Activated B cell treated with CpG ODN at 0.5 μM for 24 hours (primary cell): ENCODE measurements at regions of chr9 and their contacts with region 1.

Region 1: DNA sequence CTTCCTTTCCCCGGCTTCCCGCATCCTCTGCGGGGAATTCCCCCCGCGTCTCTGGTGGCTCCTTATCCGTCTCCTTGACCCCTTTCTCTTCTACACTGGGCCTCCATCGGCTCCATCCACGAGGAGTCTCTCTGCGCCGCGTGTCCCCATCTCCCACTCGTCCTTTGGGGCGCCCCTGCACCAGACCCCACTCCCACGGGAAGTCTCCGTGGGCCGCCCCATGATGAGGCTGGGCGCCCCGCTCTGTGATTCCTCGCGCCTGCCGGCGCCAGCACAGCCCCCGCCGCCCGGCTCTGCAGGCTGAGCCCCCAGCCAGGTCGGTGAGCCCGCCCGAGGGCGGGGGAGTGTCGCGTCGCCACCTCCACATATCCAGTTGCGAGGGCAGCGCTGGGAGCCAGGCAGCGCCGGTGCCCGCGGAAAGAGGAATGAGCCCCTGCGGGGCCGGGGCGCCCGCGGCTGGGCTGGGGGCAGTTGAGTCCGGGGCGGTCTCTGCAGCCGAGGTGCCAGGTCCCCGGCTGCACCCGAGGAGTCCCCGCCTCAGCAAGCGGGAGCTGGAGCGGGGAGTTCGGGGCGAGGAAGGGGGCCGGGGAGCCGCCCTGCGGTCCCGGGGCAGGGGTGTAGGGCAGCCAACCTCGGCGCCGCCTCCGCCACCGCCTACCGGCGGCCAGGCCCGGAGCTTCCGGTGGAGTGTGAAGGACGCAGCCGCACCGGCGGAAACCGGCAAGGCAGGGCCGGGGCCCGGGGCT is 2.1 kb upstream of the TRAF1 start:
- DNase-seq: peak; percentile 76
- ATAC-seq: peak; percentile 41
- H3K4me3 Mint-ChIP-seq: peak overlapping the region; percentile 87
- H3K27ac Mint-ChIP-seq: peak overlapping the region; percentile 99
- H3K4me1 Mint-ChIP-seq: peaks cover 89% of the 10 kb centered on the region
- H3K27me3 Mint-ChIP-seq: no peaks in the 10 kb centered on the region
- CTCF ChIP-seq: no peak

Region 2: DNA sequence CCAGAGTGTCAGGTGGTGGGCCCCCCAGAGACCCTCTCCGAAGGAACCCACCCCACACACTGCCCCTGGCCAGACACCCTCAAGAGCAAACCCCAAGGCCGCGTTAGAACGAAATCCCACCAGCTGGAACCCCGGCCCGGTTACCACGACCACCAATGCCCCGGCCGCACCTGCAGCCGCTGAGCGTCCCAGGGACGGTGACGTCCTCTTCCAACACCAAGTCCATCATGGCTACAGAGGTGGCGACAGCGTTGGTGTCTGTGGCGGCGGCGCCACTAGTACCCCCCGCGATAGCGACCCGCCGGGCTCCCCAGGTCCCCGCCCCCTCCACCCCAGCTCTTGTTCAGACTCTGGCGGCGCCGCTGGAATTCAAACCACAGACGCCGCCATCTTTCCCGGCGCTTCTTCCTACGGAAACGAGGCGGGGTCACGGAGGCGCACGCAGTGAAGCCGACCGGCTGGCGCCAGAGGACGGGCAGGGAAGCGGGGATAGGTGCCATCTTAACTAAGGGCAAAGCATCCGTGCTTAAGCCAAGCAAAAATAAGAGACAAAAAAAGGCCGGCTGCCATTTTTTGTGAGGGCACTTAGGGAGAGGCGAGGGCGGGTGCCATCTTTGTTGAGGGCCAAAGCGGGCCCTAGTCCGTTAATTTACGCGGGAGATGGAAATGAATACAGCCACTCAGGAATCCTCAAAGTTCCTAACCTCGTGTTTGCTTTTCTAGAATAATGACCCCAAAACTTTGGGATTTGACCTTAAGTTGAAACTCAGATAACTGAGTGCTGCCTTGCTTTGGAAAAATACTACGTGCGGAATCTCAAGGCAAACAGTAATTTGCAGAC is 348.7 kb before region 1 on chr9 and contains the start of gene CDK5RAP2:
- CTCF ChIA-PET with region 1: no interaction called
- POLR2A ChIA-PET with region 1: no interaction called
- intact Hi-C with region 1: loop called (anchors 5 kb)
- DNase-seq: peak; percentile 78
- ATAC-seq: peak; percentile 94
- H3K4me3 Mint-ChIP-seq: peak within 1 kb of the TSS; percentile 94
- H3K27ac Mint-ChIP-seq: peak within 1 kb of the TSS; percentile 88
- H3K4me1 Mint-ChIP-seq: peaks cover 47% of the 10 kb centered on the region
- H3K27me3 Mint-ChIP-seq: no peaks in the 10 kb centered on the region
- CTCF ChIP-seq: no peak
- total RNA-seq, gene CDK5RAP2: 63.9 and 80.0 TPM in 2 replicates

Region 3: GRCh38 chr9:120792898-120793765 is 135.5 kb before region 1 on chr9 and contains the start of gene FBXW2:
- CTCF ChIA-PET with region 1: interaction called, 5 read pairs
- POLR2A ChIA-PET with region 1: interaction called, 15 read pairs
- intact Hi-C with region 1: no loop called
- DNase-seq: peak; percentile 87
- ATAC-seq: peak; percentile 91
- H3K4me3 Mint-ChIP-seq: peak within 1 kb of the TSS; percentile 91
- H3K27ac Mint-ChIP-seq: peak within 1 kb of the TSS; percentile 89
- H3K4me1 Mint-ChIP-seq: peaks cover 38% of the 10 kb centered on the region
- H3K27me3 Mint-ChIP-seq: no peaks in the 10 kb centered on the region
- CTCF ChIP-seq: no peak
- total RNA-seq, gene FBXW2: 70.4 and 77.9 TPM in 2 replicates

Region 4: GRCh38 chr9:120807607-120808379 is 120.9 kb before region 1 on chr9:
- CTCF ChIA-PET with region 1: no interaction called
- POLR2A ChIA-PET with region 1: no interaction called
- intact Hi-C with region 1: no loop called
- DNase-seq: no peak
- ATAC-seq: no peak
- H3K4me3 Mint-ChIP-seq: no peak overlapping the region
- H3K27ac Mint-ChIP-seq: no peak overlapping the region
- H3K4me1 Mint-ChIP-seq: no peaks in the 10 kb centered on the region
- H3K27me3 Mint-ChIP-seq: no peaks in the 10 kb centered on the region
- CTCF ChIP-seq: no peak

Region 5: DNA sequence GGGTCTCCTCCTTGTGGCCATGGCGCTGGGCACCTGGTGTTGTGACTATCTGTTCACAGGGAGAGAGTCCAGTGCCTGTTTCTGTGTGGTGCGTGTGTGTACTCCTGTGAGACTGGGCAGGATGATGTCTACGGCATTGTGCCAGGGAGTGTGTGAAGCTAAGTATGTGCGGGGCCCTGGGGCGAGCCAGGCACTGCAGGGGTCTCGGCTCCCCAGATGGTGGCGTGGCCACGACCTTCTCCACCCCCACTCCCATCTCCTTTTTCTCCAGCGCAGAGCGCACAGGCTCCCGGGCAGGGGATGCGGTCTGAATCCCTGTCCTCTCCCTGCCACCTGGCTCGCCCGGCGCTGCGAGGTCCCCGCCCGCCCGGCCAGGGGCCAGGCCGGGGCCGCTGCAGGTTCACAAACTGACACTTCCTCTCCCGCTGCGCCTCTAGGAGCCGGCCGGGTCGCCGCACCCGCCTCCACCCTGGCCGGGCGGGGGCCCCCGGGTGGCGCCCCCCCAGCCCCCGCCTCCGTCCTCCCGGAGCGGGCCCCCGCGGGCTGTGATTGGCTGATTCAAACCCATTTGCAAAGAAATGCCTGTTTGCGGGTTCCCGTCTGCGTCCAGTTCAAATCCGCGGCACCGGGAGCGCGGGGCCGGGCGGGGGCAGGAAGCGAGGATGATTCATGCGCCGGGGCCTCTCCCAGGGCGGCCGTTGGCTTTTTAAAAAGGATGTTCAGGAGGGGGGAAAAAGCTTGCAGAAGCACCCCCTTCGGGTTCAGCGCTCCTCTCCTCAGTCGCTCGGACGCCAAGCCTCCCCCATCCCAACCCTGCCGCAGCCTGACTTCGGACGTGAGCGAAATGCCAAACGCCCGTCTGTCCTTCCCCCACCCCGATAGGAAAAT is 52.5 kb before region 1 on chr9:
- CTCF ChIA-PET with region 1: interaction called, 3 read pairs
- POLR2A ChIA-PET with region 1: interaction called, 25 read pairs
- intact Hi-C with region 1: loop called (anchors 1 kb)
- DNase-seq: peak; percentile 66
- ATAC-seq: peak; percentile 74
- H3K4me3 Mint-ChIP-seq: peak overlapping the region; percentile 83
- H3K27ac Mint-ChIP-seq: peak overlapping the region; percentile 80
- H3K4me1 Mint-ChIP-seq: peaks cover 54% of the 10 kb centered on the region
- H3K27me3 Mint-ChIP-seq: peaks cover 2% of the 10 kb centered on the region
- CTCF ChIP-seq: no peak

Region 6: GRCh38 chr9:120904061-120904977 is 24.3 kb before region 1 on chr9:
- CTCF ChIA-PET with region 1: interaction called, 3 read pairs
- POLR2A ChIA-PET with region 1: interaction called, 179 read pairs
- intact Hi-C with region 1: no loop called
- DNase-seq: no peak
- ATAC-seq: peak; percentile 53
- H3K4me3 Mint-ChIP-seq: peak overlapping the region; percentile 24
- H3K27ac Mint-ChIP-seq: peak overlapping the region; percentile 74
- H3K4me1 Mint-ChIP-seq: peaks cover 68% of the 10 kb centered on the region
- H3K27me3 Mint-ChIP-seq: no peaks in the 10 kb centered on the region
- CTCF ChIP-seq: no peak

Region 7: DNA sequence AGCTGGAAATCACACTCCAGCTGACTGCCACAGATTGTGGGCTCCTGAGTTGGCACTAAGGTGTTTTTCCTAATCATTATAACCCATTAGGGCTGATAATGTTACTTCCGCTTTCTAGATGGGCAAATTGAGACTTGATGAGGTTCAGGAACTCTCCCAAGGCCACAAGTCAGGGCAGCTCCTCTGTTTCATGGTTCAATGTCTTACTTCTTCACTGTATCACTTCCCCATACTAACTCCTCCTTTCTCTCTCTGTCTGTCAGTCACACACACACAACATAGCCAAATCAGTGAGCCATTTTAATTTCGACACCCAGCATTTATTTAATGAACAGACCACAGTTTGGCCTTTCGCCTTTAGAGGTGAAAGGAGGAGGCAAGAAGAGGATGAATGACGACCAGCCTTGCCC is 15.8 kb after region 1 on chr9:
- CTCF ChIA-PET with region 1: interaction called, 5 read pairs
- POLR2A ChIA-PET with region 1: interaction called, 23 read pairs
- intact Hi-C with region 1: loop called (anchors 1 kb)
- DNase-seq: no peak
- ATAC-seq: peak; percentile 100
- H3K4me3 Mint-ChIP-seq: peak overlapping the region; percentile 7
- H3K27ac Mint-ChIP-seq: peak overlapping the region; percentile 64
- H3K4me1 Mint-ChIP-seq: peaks cover 23% of the 10 kb centered on the region
- H3K27me3 Mint-ChIP-seq: no peaks in the 10 kb centered on the region
- CTCF ChIP-seq: no peak

Region 8: DNA sequence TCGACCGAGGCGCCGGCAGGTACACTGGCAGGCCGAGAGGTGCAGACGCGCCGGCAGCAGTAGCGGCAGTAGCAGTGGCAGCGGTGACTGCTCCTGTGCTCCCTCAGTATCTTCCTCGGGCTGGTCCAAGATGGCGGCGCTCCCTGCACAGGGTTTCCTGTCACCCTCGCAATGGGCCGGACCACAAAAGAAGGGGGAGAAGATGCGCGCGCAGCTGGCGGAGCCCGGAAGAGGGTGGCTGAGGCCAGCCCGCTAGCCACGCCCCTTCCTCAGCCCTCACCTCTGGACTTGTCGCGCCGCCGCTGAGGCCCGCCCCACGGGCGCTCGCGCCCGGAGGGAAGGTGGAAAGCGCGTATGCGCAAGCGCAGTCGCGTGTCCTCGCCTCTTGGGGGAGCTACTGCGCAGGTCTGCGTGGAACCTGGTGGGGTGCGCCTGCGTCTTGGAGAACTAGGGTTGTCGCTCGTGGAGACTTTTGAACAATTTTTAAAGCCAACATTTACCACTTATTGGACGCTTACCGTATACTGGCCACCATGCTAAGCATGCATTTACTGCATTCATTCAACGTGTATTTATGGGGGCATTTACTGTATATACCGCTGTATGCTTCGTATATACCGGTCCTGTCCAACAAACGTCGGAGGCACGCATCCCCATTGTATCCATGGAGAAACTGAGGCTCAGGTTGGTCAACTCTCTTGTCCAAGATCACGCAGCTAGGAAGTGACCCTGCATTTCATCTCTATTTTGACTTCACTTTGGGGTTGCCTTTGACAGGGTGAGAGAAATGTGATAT is 273.3 kb after region 1 on chr9 and contains the start of gene RAB14:
- CTCF ChIA-PET with region 1: no interaction called
- POLR2A ChIA-PET with region 1: interaction called, 5 read pairs
- intact Hi-C with region 1: loop called (anchors 5 kb)
- DNase-seq: peak; percentile 100
- ATAC-seq: peak; percentile 88
- H3K4me3 Mint-ChIP-seq: peak within 1 kb of the TSS; percentile 94
- H3K27ac Mint-ChIP-seq: peak within 1 kb of the TSS; percentile 91
- H3K4me1 Mint-ChIP-seq: peaks cover 63% of the 10 kb centered on the region
- H3K27me3 Mint-ChIP-seq: no peaks in the 10 kb centered on the region
- CTCF ChIP-seq: no peak
- total RNA-seq, gene RAB14: 55.9 and 63.8 TPM in 2 replicates